CD8-positive, alpha-beta T cell (primary cell): ENCODE measurements at regions of chrX and their contacts with region 1.

Region 1: DNA sequence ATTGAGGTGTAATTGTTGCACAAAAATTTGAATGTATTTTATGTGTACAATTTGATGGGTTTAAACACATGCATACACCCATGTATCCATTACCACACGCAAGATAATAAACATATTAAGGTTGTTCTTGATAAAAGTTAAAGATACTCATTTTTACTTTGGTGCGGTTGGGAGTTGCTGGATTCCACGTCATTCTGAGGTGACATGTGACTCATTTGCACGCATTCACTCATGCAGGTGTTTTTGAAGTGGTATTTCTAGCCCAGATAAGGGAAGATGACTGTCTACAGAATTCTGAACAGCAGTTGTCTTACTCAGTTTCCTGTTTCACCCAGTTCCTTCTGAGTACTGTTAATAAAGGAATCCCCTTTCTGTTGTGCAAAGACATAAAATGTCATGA is 142.0 kb downstream of the RTL3 start:
- DNase-seq: peak in 8 of 9 experiments; percentile 1 to 90 (median 43)
- ATAC-seq: peak; percentile 89
- H3K4me3 ChIP-seq: no peak overlapping the region
- H3K4me3 Mint-ChIP-seq: peak overlapping the region; percentile 16
- H3K27ac ChIP-seq: no peak overlapping the region
- H3K27ac Mint-ChIP-seq: peak overlapping the region; percentile 90
- H3K4me1 ChIP-seq: peaks cover 20% of the 10 kb centered on the region
- H3K4me1 Mint-ChIP-seq: peaks cover 33% of the 10 kb centered on the region
- H3K27me3 ChIP-seq: no peaks in the 10 kb centered on the region
- H3K27me3 Mint-ChIP-seq: no peaks in the 10 kb centered on the region
- CTCF ChIP-seq: no peak

Region 2: GRCh38 chrX:78139160-78140123 is 377.7 kb before region 1 on chrX and contains the start of gene TAF9B:
- CTCF ChIA-PET with region 1: no interaction called
- POLR2A ChIA-PET with region 1: no interaction called
- intact Hi-C with region 1: loop called in 1 of 2 experiments (anchors 10 kb)
- DNase-seq: peak; percentile 68 to 89 (median 77)
- ATAC-seq: peak; percentile 97
- H3K4me3 ChIP-seq: peak within 1 kb of the TSS; percentile 73 to 93
- H3K4me3 Mint-ChIP-seq: peak within 1 kb of the TSS; percentile 93
- H3K27ac ChIP-seq: peak within 1 kb of the TSS; percentile 77 to 83
- H3K27ac Mint-ChIP-seq: peak within 1 kb of the TSS; percentile 92
- H3K4me1 ChIP-seq: no peaks in the 10 kb centered on the region
- H3K4me1 Mint-ChIP-seq: peaks cover 9% of the 10 kb centered on the region
- H3K27me3 ChIP-seq: no peaks in the 10 kb centered on the region
- H3K27me3 Mint-ChIP-seq: no peaks in the 10 kb centered on the region
- CTCF ChIP-seq: no peak
- total RNA-seq, gene TAF9B: 5.7 to 7.1 TPM

Region 3: GRCh38 chrX:78333521-78333920 is 183.6 kb before region 1 on chrX:
- CTCF ChIA-PET with region 1: no interaction called
- POLR2A ChIA-PET with region 1: no interaction called
- intact Hi-C with region 1: loop called in 1 of 2 experiments (anchors 5 kb)
- DNase-seq: peak in 2 of 9 experiments; percentile 54 to 74
- ATAC-seq: peak; percentile 82
- H3K4me3 ChIP-seq: no peak overlapping the region
- H3K4me3 Mint-ChIP-seq: no peak overlapping the region
- H3K27ac ChIP-seq: no peak overlapping the region
- H3K27ac Mint-ChIP-seq: no peak overlapping the region
- H3K4me1 ChIP-seq: peaks cover 25% of the 10 kb centered on the region
- H3K4me1 Mint-ChIP-seq: peaks cover 52% of the 10 kb centered on the region
- H3K27me3 ChIP-seq: no peaks in the 10 kb centered on the region
- H3K27me3 Mint-ChIP-seq: no peaks in the 10 kb centered on the region
- CTCF ChIP-seq: no peak

Region 4: GRCh38 chrX:78506248-78506647 is 10.9 kb before region 1 on chrX:
- CTCF ChIA-PET with region 1: no interaction called
- POLR2A ChIA-PET with region 1: no interaction called
- intact Hi-C with region 1: no loop called
- DNase-seq: no peak
- ATAC-seq: no peak
- H3K4me3 ChIP-seq: no peak overlapping the region
- H3K4me3 Mint-ChIP-seq: no peak overlapping the region
- H3K27ac ChIP-seq: no peak overlapping the region
- H3K27ac Mint-ChIP-seq: no peak overlapping the region
- H3K4me1 ChIP-seq: no peaks in the 10 kb centered on the region
- H3K4me1 Mint-ChIP-seq: no peaks in the 10 kb centered on the region
- H3K27me3 ChIP-seq: no peaks in the 10 kb centered on the region
- H3K27me3 Mint-ChIP-seq: no peaks in the 10 kb centered on the region
- CTCF ChIP-seq: no peak

Region 5: DNA sequence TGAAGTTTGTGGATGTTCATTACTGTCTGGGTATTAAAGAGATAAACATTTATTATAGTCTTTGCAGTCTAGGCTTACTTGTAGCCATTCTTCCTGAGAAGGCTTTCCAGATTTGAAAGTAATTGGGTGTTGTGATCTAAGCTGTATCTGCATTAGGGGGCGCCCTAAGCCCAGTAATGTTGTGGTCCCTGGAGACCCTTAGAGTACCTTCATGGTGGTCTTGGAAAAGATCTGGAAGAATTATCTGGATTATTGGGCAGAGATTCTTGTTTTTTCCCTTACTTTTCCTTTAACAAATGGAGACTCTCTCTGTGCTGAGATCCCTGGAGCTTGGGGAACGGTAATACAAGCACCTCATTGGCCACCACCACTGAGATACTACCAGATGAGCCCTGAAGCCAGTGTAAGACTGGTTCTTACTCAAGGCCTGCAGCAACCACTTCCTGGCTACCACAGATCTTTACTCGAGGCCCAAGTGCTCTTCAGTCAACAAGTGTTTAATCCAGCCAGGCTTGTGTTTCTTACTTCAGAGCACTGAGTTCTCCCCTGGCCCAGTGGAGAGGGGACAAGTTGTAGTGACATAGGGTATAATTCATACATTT is 78.9 kb after region 1 on chrX:
- CTCF ChIA-PET with region 1: no interaction called
- POLR2A ChIA-PET with region 1: no interaction called
- intact Hi-C with region 1: no loop called
- DNase-seq: peak in 2 of 9 experiments; percentile 10 to 29
- ATAC-seq: no peak
- H3K4me3 ChIP-seq: no peak overlapping the region
- H3K4me3 Mint-ChIP-seq: no peak overlapping the region
- H3K27ac ChIP-seq: no peak overlapping the region
- H3K27ac Mint-ChIP-seq: no peak overlapping the region
- H3K4me1 ChIP-seq: no peaks in the 10 kb centered on the region
- H3K4me1 Mint-ChIP-seq: no peaks in the 10 kb centered on the region
- H3K27me3 ChIP-seq: no peaks in the 10 kb centered on the region
- H3K27me3 Mint-ChIP-seq: no peaks in the 10 kb centered on the region
- CTCF ChIP-seq: no peak

Region 6: DNA sequence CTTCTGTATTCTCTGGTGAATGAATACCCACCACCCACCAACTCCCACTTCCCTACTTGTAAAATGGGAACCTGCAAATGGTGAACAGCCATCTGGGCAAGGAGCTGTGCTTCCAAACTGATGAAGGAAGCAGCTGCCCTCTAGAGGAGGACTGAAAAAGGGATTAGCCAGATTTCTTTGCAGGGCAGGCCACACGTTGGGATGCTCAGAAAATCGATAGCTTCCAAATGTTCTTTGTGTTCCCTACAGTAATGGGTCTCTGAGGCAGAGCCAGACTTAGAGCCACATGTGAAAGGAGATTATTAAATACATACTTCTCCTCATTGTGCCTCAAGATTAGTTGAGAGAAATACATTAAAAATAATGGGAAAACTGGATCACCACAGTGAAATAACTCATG is 191.1 kb after region 1 on chrX:
- CTCF ChIA-PET with region 1: no interaction called
- POLR2A ChIA-PET with region 1: no interaction called
- intact Hi-C with region 1: no loop called
- DNase-seq: peak in 2 of 9 experiments; percentile 2 to 5
- ATAC-seq: no peak
- H3K4me3 ChIP-seq: no peak overlapping the region
- H3K4me3 Mint-ChIP-seq: no peak overlapping the region
- H3K27ac ChIP-seq: no peak overlapping the region
- H3K27ac Mint-ChIP-seq: no peak overlapping the region
- H3K4me1 ChIP-seq: no peaks in the 10 kb centered on the region
- H3K4me1 Mint-ChIP-seq: no peaks in the 10 kb centered on the region
- H3K27me3 ChIP-seq: no peaks in the 10 kb centered on the region
- H3K27me3 Mint-ChIP-seq: no peaks in the 10 kb centered on the region
- CTCF ChIP-seq: no peak